AG04450 (cell line): ENCODE measurements at regions of chr1 and their contacts with region 1.

Region 1: DNA sequence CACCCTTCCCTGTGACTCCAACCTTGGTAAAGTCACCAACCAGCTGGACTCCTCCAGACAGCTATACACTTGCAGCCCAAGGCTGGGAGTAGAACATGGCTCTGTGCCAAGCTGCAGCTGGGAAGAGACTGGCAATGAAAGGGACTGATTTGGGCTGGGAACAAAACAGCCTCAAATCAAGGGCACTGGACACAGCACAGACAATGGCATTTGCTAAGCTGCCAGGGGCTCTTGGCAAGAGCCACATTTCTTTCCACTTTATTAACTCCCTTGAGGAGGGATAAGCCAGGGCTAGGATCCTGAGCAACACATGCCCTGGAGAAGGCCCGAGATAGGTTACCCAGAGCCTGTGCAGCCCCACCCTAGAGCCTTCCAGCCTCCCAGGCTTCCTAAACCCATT is 12.0 kb downstream of the SYT11 start:
- DNase-seq: no peak
- H3K4me3 ChIP-seq: no peak overlapping the region
- H3K27ac ChIP-seq: no peak overlapping the region
- H3K27me3 ChIP-seq: no peaks in the 10 kb centered on the region
- CTCF ChIP-seq: no peak

Region 2: GRCh38 chr1:155794605-155795245 is 76.7 kb before region 1 on chr1:
- CTCF ChIA-PET with region 1: no interaction called
- POLR2A ChIA-PET with region 1: interaction called, 11 read pairs
- DNase-seq: peak; percentile 34
- H3K4me3 ChIP-seq: no peak overlapping the region
- H3K27ac ChIP-seq: no peak overlapping the region
- H3K27me3 ChIP-seq: no peaks in the 10 kb centered on the region
- CTCF ChIP-seq: no peak